ENCODE measurements at regions of chr11 and their contacts with region 1.

Region 1: GRCh38 chr11:83007909-83008580 is 63.7 kb downstream of the RAB30 start:
- DNase-seq: no peak
- ATAC-seq: peak; percentile 28
- H3K4me3 Mint-ChIP-seq: peak overlapping the region; percentile 36
- H3K27ac Mint-ChIP-seq: peak overlapping the region; percentile 82
- H3K4me1 Mint-ChIP-seq: peaks cover 77% of the 10 kb centered on the region
- H3K27me3 Mint-ChIP-seq: no peaks in the 10 kb centered on the region
- CTCF ChIP-seq: no peak

Region 2: DNA sequence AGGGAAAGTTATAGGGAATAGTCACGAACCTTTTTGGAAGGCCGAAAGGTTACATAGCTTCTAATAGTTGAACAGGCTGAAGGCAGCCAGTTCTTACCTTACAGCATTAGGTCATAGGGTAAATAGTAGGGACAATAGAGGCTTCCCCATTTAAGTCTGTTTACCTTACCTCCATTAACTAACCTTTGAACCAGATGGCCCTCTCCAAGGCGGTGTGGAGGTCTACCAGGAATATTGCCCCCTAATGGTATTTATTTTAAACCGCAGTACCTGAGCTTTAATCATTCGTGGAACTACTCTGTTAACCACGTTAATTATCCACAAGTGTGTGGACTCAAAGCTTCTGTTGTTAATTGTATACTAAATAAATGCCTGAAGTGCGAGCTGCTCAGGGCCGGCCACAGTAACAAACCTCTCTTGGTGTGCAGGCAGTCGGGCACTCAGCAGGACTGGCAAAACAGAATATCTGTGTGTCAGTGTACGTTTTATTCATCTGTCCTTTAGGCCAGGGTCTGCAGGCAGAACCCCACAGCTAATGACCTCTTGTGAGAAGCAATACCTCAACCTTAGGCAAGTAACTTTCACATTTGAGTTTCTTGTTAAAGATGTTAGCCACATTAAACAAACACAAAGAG is 189.5 kb before region 1 on chr11:
- CTCF ChIA-PET with region 1: no interaction called
- POLR2A ChIA-PET with region 1: no interaction called
- intact Hi-C with region 1: no loop called
- DNase-seq: no peak
- ATAC-seq: no peak
- H3K4me3 Mint-ChIP-seq: no peak overlapping the region
- H3K27ac Mint-ChIP-seq: no peak overlapping the region
- H3K4me1 Mint-ChIP-seq: no peaks in the 10 kb centered on the region
- H3K27me3 Mint-ChIP-seq: peaks cover 9% of the 10 kb centered on the region
- CTCF ChIP-seq: no peak

Region 3: DNA sequence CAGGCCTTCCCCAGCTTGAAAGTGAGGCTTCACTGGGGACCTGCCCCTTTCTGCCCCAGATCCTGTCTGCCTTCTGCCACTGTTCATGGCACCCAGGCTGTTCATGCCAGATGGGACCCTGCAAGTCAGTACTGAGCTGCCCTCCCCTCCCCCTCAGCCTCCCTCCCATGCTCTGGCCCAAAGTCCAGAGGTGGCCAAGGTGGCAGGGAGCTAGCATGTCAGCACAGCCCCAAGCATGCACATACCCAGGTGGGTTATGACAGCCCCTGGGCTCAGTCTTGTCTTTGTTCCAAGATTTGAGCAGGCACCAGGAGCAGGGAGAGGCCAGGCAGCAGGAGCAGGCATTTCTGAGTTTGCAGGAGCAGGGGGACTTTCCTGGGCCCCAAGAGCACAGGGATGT is 62.4 kb before region 1 on chr11:
- CTCF ChIA-PET with region 1: no interaction called
- POLR2A ChIA-PET with region 1: no interaction called
- intact Hi-C with region 1: no loop called
- DNase-seq: no peak
- ATAC-seq: no peak
- H3K4me3 Mint-ChIP-seq: no peak overlapping the region
- H3K27ac Mint-ChIP-seq: no peak overlapping the region
- H3K4me1 Mint-ChIP-seq: peaks cover 2% of the 10 kb centered on the region
- H3K27me3 Mint-ChIP-seq: no peaks in the 10 kb centered on the region
- CTCF ChIP-seq: no peak

Region 4: GRCh38 chr11:82996966-82997606 is 11.0 kb before region 1 on chr11:
- CTCF ChIA-PET with region 1: interaction called, 6 read pairs
- POLR2A ChIA-PET with region 1: interaction called, 29 read pairs
- intact Hi-C with region 1: loop called (anchors 1 kb)
- DNase-seq: no peak
- ATAC-seq: peak; percentile 88
- H3K4me3 Mint-ChIP-seq: peak overlapping the region; percentile 75
- H3K27ac Mint-ChIP-seq: peak overlapping the region; percentile 84
- H3K4me1 Mint-ChIP-seq: peaks cover 93% of the 10 kb centered on the region
- H3K27me3 Mint-ChIP-seq: no peaks in the 10 kb centered on the region
- CTCF ChIP-seq: no peak

Region 5: GRCh38 chr11:83019888-83020579 is 12.0 kb after region 1 on chr11:
- CTCF ChIA-PET with region 1: interaction called, 3 read pairs
- POLR2A ChIA-PET with region 1: interaction called, 4 read pairs
- intact Hi-C with region 1: loop called (anchors 1 kb)
- DNase-seq: no peak
- ATAC-seq: no peak
- H3K4me3 Mint-ChIP-seq: no peak overlapping the region
- H3K27ac Mint-ChIP-seq: no peak overlapping the region
- H3K4me1 Mint-ChIP-seq: peaks cover 78% of the 10 kb centered on the region
- H3K27me3 Mint-ChIP-seq: no peaks in the 10 kb centered on the region
- CTCF ChIP-seq: no peak

Region 6: GRCh38 chr11:83044958-83045712 is 37.1 kb after region 1 on chr11:
- CTCF ChIA-PET with region 1: no interaction called
- POLR2A ChIA-PET with region 1: no interaction called
- intact Hi-C with region 1: no loop called
- DNase-seq: no peak
- ATAC-seq: peak; percentile 64
- H3K4me3 Mint-ChIP-seq: peak overlapping the region; percentile 13
- H3K27ac Mint-ChIP-seq: peak overlapping the region; percentile 64
- H3K4me1 Mint-ChIP-seq: peaks cover 86% of the 10 kb centered on the region
- H3K27me3 Mint-ChIP-seq: no peaks in the 10 kb centered on the region
- CTCF ChIP-seq: no peak